AG04450 (cell line): ENCODE measurements at regions of chr3 and their contacts with region 1.

Region 1: GRCh38 chr3:58585005-58585786 is 8.0 kb upstream of the FAM107A start:
- DNase-seq: no peak
- H3K4me3 ChIP-seq: peak overlapping the region; percentile 67
- H3K27ac ChIP-seq: no peak overlapping the region
- H3K27me3 ChIP-seq: peaks cover 32% of the 10 kb centered on the region
- CTCF ChIP-seq: peak; percentile 77

Region 2: GRCh38 chr3:58356054-58356453 is 229.1 kb before region 1 on chr3:
- CTCF ChIA-PET with region 1: no interaction called
- POLR2A ChIA-PET with region 1: no interaction called
- DNase-seq: no peak
- H3K4me3 ChIP-seq: no peak overlapping the region
- H3K27ac ChIP-seq: no peak overlapping the region
- H3K27me3 ChIP-seq: no peaks in the 10 kb centered on the region
- CTCF ChIP-seq: no peak

Region 3: DNA sequence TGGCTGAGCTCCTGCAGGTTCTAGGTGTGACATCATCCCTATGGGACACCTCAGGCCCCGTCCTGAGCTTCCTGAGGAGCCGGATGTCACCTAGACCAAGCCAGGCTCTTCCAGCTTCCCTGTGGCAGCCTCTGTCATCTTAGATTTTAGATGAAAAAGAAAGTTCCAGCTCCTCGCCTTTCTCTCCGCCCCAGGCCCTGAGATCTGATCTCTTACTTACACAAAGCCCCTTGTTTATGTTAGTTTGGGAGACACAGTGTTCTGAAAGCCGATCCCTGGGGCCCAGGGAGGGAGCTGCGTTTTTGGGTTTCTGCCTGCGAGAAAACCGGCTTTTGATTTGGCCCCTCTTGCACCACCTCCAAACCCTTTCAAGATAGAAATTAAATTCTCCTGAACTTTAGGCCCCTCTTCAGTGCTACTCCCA is 32.2 kb after region 1 on chr3:
- CTCF ChIA-PET with region 1: interaction called, 16 read pairs
- POLR2A ChIA-PET with region 1: no interaction called
- DNase-seq: peak; percentile 1
- H3K4me3 ChIP-seq: no peak overlapping the region
- H3K27ac ChIP-seq: peak overlapping the region; percentile 31
- H3K27me3 ChIP-seq: peaks cover 2% of the 10 kb centered on the region
- CTCF ChIP-seq: no peak

Region 4: GRCh38 chr3:58857402-58857801 is 272.2 kb after region 1 on chr3:
- CTCF ChIA-PET with region 1: no interaction called
- POLR2A ChIA-PET with region 1: no interaction called
- DNase-seq: no peak
- H3K4me3 ChIP-seq: no peak overlapping the region
- H3K27ac ChIP-seq: no peak overlapping the region
- H3K27me3 ChIP-seq: no peaks in the 10 kb centered on the region
- CTCF ChIP-seq: no peak